ENCODE measurements at regions of chr10 and their contacts with region 1.

Region 1: GRCh38 chr10:95363303-95363912 is 72.6 kb upstream of the PDLIM1 start:
- DNase-seq: peak; percentile 84
- H3K4me3 Mint-ChIP-seq: no peak overlapping the region
- H3K27ac Mint-ChIP-seq: no peak overlapping the region
- H3K4me1 Mint-ChIP-seq: peaks cover 16% of the 10 kb centered on the region
- H3K27me3 Mint-ChIP-seq: peaks cover 18% of the 10 kb centered on the region
- CTCF ChIP-seq: peak; percentile 86

Region 2: DNA sequence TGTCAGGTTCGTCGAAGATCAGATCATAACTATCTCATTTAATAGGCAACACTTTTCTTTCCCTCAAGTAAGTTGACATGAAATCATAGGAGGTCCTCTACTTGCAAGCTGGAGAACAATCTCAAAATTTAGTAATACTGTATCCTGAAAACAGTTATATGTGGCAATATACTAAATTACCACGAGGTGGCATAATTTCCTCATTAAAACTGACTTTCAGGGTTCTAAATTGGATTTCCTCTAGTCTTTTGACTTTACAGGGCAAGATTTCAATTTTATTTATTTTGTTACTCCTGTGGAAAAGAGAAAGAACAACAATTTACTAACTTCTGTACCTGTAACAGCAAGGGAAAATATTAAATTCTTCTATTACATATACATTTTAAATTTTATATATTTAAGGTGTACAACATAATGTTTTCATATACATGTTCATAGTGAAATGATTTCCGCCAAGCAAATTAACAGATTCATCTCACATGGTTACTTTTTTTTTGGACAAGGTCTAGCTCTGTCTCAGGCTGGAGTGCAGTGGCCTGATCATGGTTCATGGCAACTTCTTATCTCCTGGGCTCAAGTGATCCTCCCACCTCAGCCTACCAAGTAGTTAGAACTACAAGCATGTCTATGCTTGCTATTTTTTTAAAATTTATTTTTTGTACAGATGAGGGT is 733.3 kb before region 1 on chr10:
- CTCF ChIA-PET with region 1: interaction called, 4 read pairs
- POLR2A ChIA-PET with region 1: no interaction called
- intact Hi-C with region 1: loop called (anchors 5 kb)
- DNase-seq: peak; percentile 49
- H3K4me3 Mint-ChIP-seq: no peak overlapping the region
- H3K27ac Mint-ChIP-seq: no peak overlapping the region
- H3K4me1 Mint-ChIP-seq: no peaks in the 10 kb centered on the region
- H3K27me3 Mint-ChIP-seq: no peaks in the 10 kb centered on the region
- CTCF ChIP-seq: peak; percentile 51

Region 3: GRCh38 chr10:95201736-95202135 is 161.7 kb before region 1 on chr10:
- CTCF ChIA-PET with region 1: interaction called, 18 read pairs
- POLR2A ChIA-PET with region 1: no interaction called
- intact Hi-C with region 1: loop called (anchors 1 kb)
- DNase-seq: peak; percentile 86
- H3K4me3 Mint-ChIP-seq: no peak overlapping the region
- H3K27ac Mint-ChIP-seq: no peak overlapping the region
- H3K4me1 Mint-ChIP-seq: no peaks in the 10 kb centered on the region
- H3K27me3 Mint-ChIP-seq: peaks cover 13% of the 10 kb centered on the region
- CTCF ChIP-seq: peak; percentile 57

Region 4: GRCh38 chr10:95268438-95268837 is 95.0 kb before region 1 on chr10:
- CTCF ChIA-PET with region 1: interaction called, 12 read pairs
- POLR2A ChIA-PET with region 1: interaction called, 4 read pairs
- intact Hi-C with region 1: no loop called
- DNase-seq: no peak
- H3K4me3 Mint-ChIP-seq: no peak overlapping the region
- H3K27ac Mint-ChIP-seq: peak overlapping the region; percentile 77
- H3K4me1 Mint-ChIP-seq: peaks cover 35% of the 10 kb centered on the region
- H3K27me3 Mint-ChIP-seq: no peaks in the 10 kb centered on the region
- CTCF ChIP-seq: no peak

Region 5: DNA sequence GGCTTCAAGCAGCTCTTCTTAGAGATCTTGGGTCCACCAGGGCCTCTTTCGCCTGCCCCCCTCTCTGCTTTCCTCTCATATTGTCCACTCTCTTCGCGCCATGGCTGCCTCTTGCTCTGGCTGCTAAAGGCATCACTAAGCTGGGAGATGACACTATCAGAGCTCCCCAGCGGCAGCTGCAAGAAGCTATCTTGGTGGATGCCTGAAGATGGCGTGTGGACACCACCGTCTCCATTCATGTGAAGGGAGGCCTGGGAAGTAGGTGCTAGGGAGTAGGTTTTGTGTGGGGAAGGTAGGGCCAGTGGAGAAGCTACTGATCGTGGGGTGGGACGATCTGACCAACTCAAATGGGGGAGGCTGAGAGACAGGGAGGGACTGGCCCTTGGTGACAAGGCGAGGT is 26.7 kb before region 1 on chr10:
- CTCF ChIA-PET with region 1: interaction called, 13 read pairs
- POLR2A ChIA-PET with region 1: no interaction called
- intact Hi-C with region 1: no loop called
- DNase-seq: no peak
- H3K4me3 Mint-ChIP-seq: no peak overlapping the region
- H3K27ac Mint-ChIP-seq: no peak overlapping the region
- H3K4me1 Mint-ChIP-seq: peaks cover 9% of the 10 kb centered on the region
- H3K27me3 Mint-ChIP-seq: no peaks in the 10 kb centered on the region
- CTCF ChIP-seq: no peak

Region 6: DNA sequence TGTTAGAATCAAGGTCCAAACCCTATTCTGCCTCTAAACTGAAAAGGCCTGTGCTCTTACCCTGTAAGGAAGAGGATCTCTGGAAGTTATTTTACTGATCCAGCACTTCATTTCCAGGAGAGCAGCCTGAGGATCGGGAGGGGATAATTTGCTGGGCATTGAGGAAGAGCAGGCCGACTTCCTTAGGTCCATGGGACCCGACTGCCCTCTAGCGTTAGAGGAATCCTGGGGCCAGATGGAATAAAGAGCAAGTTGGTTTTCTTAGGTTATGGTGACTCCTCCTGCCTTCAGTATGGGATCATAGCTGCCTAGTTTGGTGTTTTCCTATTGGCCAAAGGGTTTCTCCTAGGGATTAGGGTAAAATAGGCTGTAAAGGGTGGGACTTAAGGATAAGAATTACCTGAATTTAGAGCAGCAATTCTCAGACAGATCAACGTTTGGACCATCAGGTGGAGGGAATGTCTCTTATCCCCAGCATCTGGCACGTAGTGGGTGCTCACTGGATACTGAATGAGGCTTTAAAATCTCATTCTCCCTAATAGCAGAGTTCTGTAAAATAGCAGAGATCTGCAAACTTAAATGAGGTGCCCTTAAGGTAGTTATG is 237.8 kb after region 1 on chr10:
- CTCF ChIA-PET with region 1: interaction called, 23 read pairs
- POLR2A ChIA-PET with region 1: interaction called, 3 read pairs
- intact Hi-C with region 1: no loop called
- DNase-seq: peak; percentile 89
- H3K4me3 Mint-ChIP-seq: no peak overlapping the region
- H3K27ac Mint-ChIP-seq: no peak overlapping the region
- H3K4me1 Mint-ChIP-seq: no peaks in the 10 kb centered on the region
- H3K27me3 Mint-ChIP-seq: peaks cover 21% of the 10 kb centered on the region
- CTCF ChIP-seq: peak; percentile 87

Measured in MCF 10A (cell line).